CD4-positive, alpha-beta memory T cell (primary cell): ENCODE measurements at regions of chr14 and their contacts with region 1.

Region 1: GRCh38 chr14:87944987-87945604 is 47.9 kb downstream of the GALC start:
- DNase-seq: peak in 4 of 5 donors; percentile 49 to 56 (median 53)
- H3K4me3 ChIP-seq: no peak overlapping the region
- H3K4me3 Mint-ChIP-seq: no peak overlapping the region
- H3K27ac ChIP-seq: no peak overlapping the region
- H3K27ac Mint-ChIP-seq: no peak overlapping the region
- H3K4me1 ChIP-seq: peaks cover 13% of the 10 kb centered on the region
- H3K4me1 Mint-ChIP-seq: peaks cover 7 to 18% (median 12%) of the 10 kb centered on the region in 4 donors
- H3K27me3 ChIP-seq: no peaks in the 10 kb centered on the region
- H3K27me3 Mint-ChIP-seq: no peaks in the 10 kb centered on the region

Region 2: GRCh38 chr14:87888229-87888999 is 56.7 kb before region 1 on chr14:
- CTCF ChIA-PET with region 1: no interaction called
- POLR2A ChIA-PET with region 1: no interaction called
- intact Hi-C with region 1: no loop called
- DNase-seq: no peak
- H3K4me3 ChIP-seq: no peak overlapping the region
- H3K4me3 Mint-ChIP-seq: no peak overlapping the region
- H3K27ac ChIP-seq: no peak overlapping the region
- H3K27ac Mint-ChIP-seq: no peak overlapping the region
- H3K4me1 ChIP-seq: no peaks in the 10 kb centered on the region
- H3K4me1 Mint-ChIP-seq: no peaks in the 10 kb centered on the region
- H3K27me3 ChIP-seq: no peaks in the 10 kb centered on the region
- H3K27me3 Mint-ChIP-seq: peaks cover 3 to 8% of the 10 kb centered on the region in 2 donors

Region 3: DNA sequence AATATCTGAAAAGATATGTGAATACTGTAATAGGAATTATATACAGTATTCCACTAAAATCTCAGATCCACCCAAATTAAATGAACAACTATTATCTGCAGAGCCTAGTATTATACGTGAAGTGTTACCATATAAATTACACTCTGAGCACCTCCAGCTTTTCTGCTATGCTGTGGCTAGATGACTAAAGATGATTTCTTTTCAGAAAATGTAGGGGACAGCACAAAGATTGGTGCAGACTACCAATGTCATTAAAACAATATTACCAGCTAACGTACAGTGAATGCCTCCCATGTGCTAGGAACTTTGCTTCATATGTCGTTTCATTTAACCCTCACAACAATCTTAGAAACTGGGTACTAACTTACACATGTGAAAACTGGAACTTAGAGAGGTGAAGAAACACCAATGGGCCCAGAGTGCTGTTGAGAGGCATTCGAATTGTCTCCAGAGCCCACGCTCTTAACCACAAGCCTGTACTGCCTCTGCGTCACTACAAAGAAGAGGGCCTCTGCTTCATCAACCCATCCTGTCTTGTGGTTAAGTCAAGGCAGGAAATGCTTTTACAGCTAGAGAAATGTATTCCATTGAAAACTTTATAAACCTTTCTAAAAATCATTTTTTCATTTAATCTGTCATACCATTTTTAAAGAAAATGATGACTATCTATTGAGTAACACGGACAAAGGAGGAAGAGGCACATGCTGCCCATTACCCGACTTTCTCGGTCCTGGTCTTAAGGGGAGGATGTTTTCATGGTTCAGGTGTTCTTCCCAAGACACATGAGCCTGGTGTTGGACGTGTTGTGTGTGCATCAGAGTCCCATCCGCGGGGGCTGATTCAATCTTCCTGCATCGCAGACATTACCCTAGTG is 61.1 kb after region 1 on chr14:
- CTCF ChIA-PET with region 1: interaction called, 15 read pairs
- POLR2A ChIA-PET with region 1: interaction called, 15 read pairs
- intact Hi-C with region 1: loop called (anchors 2 kb)
- DNase-seq: peak; percentile 82 to 92 (median 87)
- H3K4me3 ChIP-seq: peak overlapping the region; percentile 49 to 73
- H3K4me3 Mint-ChIP-seq: peak overlapping the region; percentile 77 to 97 (median 88)
- H3K27ac ChIP-seq: peak overlapping the region; percentile 88
- H3K27ac Mint-ChIP-seq: peak overlapping the region; percentile 97 to 99 (median 99)
- H3K4me1 ChIP-seq: peaks cover 56% of the 10 kb centered on the region
- H3K4me1 Mint-ChIP-seq: peaks cover 42 to 74% (median 54%) of the 10 kb centered on the region in 4 donors
- H3K27me3 ChIP-seq: no peaks in the 10 kb centered on the region
- H3K27me3 Mint-ChIP-seq: no peaks in the 10 kb centered on the region

Region 4: GRCh38 chr14:88030079-88030478 is 85.0 kb after region 1 on chr14:
- CTCF ChIA-PET with region 1: interaction called, 12 read pairs
- POLR2A ChIA-PET with region 1: no interaction called
- intact Hi-C with region 1: no loop called
- DNase-seq: peak in 1 of 5 donors; percentile 18
- H3K4me3 ChIP-seq: no peak overlapping the region
- H3K4me3 Mint-ChIP-seq: peak overlapping the region in 5 of 8 donors; percentile 12 to 63 (median 43)
- H3K27ac ChIP-seq: no peak overlapping the region
- H3K27ac Mint-ChIP-seq: peak overlapping the region in 5 of 7 donors; percentile 11 to 81 (median 71)
- H3K4me1 ChIP-seq: peaks cover 51% of the 10 kb centered on the region
- H3K4me1 Mint-ChIP-seq: peaks cover 42 to 62% (median 52%) of the 10 kb centered on the region in 4 donors
- H3K27me3 ChIP-seq: no peaks in the 10 kb centered on the region
- H3K27me3 Mint-ChIP-seq: no peaks in the 10 kb centered on the region

Region 5: GRCh38 chr14:88168498-88169165 is 223.5 kb after region 1 on chr14:
- CTCF ChIA-PET with region 1: interaction called, 152 read pairs
- POLR2A ChIA-PET with region 1: interaction called, 8 read pairs
- intact Hi-C with region 1: loop called (anchors 1 kb)
- DNase-seq: peak; percentile 51 to 68 (median 61)
- H3K4me3 ChIP-seq: no peak overlapping the region
- H3K4me3 Mint-ChIP-seq: peak overlapping the region in 6 of 8 donors; percentile 10 to 66 (median 40)
- H3K27ac ChIP-seq: no peak overlapping the region
- H3K27ac Mint-ChIP-seq: peak overlapping the region in 2 of 7 donors; percentile 3 to 48
- H3K4me1 ChIP-seq: no peaks in the 10 kb centered on the region
- H3K4me1 Mint-ChIP-seq: peaks cover 0 to 18% (median 10%) of the 10 kb centered on the region in 4 donors
- H3K27me3 ChIP-seq: no peaks in the 10 kb centered on the region
- H3K27me3 Mint-ChIP-seq: peaks cover 2 to 7% of the 10 kb centered on the region in 2 donors

Region 6: DNA sequence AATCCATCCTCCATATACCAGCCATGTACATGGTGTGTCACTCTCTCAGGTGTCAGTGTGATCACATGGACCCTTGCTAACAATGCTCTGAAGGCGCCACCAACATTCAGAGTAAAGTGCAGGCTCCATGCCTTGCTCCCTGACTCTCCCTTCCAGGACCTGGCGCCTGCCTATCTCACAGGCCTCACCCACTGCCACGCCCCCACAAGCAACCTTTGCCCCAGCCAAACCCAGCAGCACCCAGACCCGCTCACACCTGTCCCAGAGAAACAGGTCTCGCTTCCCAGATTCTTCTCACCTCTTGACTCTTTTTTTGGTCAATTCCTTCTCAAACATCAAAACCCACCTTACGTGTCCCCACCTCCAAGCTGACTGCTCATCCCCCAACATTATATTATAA is 325.7 kb after region 1 on chr14:
- CTCF ChIA-PET with region 1: no interaction called
- POLR2A ChIA-PET with region 1: no interaction called
- intact Hi-C with region 1: no loop called
- DNase-seq: no peak
- H3K4me3 ChIP-seq: no peak overlapping the region
- H3K4me3 Mint-ChIP-seq: no peak overlapping the region
- H3K27ac ChIP-seq: no peak overlapping the region
- H3K27ac Mint-ChIP-seq: no peak overlapping the region
- H3K4me1 ChIP-seq: no peaks in the 10 kb centered on the region
- H3K4me1 Mint-ChIP-seq: no peaks in the 10 kb centered on the region
- H3K27me3 ChIP-seq: no peaks in the 10 kb centered on the region
- H3K27me3 Mint-ChIP-seq: peaks cover 18% of the 10 kb centered on the region in 2 donors

Region 7: GRCh38 chr14:88359500-88359899 is 414.4 kb after region 1 on chr14:
- CTCF ChIA-PET with region 1: no interaction called
- POLR2A ChIA-PET with region 1: no interaction called
- intact Hi-C with region 1: no loop called
- DNase-seq: no peak
- H3K4me3 ChIP-seq: no peak overlapping the region
- H3K4me3 Mint-ChIP-seq: no peak overlapping the region
- H3K27ac ChIP-seq: no peak overlapping the region
- H3K27ac Mint-ChIP-seq: no peak overlapping the region
- H3K4me1 ChIP-seq: no peaks in the 10 kb centered on the region
- H3K4me1 Mint-ChIP-seq: no peaks in the 10 kb centered on the region
- H3K27me3 ChIP-seq: no peaks in the 10 kb centered on the region
- H3K27me3 Mint-ChIP-seq: peaks cover 0 to 9% of the 10 kb centered on the region in 2 donors

Region 8: GRCh38 chr14:88385345-88386101 is 440.4 kb after region 1 on chr14 and contains the start of gene SPATA7:
- CTCF ChIA-PET with region 1: interaction called, 5 read pairs
- POLR2A ChIA-PET with region 1: no interaction called
- intact Hi-C with region 1: loop called (anchors 10 kb)
- DNase-seq: peak; percentile 70 to 74 (median 71)
- H3K4me3 ChIP-seq: peak within 1 kb of the TSS; percentile 97 to 98
- H3K4me3 Mint-ChIP-seq: peak within 1 kb of the TSS; percentile 95 to 97 (median 96)
- H3K27ac ChIP-seq: peak within 1 kb of the TSS; percentile 72
- H3K27ac Mint-ChIP-seq: peak within 1 kb of the TSS; percentile 75 to 96 (median 93)
- H3K4me1 ChIP-seq: peaks cover 15% of the 10 kb centered on the region
- H3K4me1 Mint-ChIP-seq: peaks cover 10 to 23% (median 16%) of the 10 kb centered on the region in 4 donors
- H3K27me3 ChIP-seq: no peaks in the 10 kb centered on the region
- H3K27me3 Mint-ChIP-seq: no peaks in the 10 kb centered on the region
- total RNA-seq, gene SPATA7: 3.4 to 3.7 TPM